ENCODE measurements at regions of chr2 and their contacts with region 1.

Region 1: GRCh38 chr2:119678998-119679710 is at the start of gene TMEM177:
- DNase-seq: peak; percentile 86 to 89 (median 88)
- H3K4me3 ChIP-seq: peak within 1 kb of the TSS; percentile 55 to 84
- H3K4me3 Mint-ChIP-seq: peak within 1 kb of the TSS; percentile 75 to 96 (median 94)
- H3K27ac ChIP-seq: peak within 1 kb of the TSS; percentile 75
- H3K27ac Mint-ChIP-seq: peak within 1 kb of the TSS; percentile 92 to 98 (median 97)
- H3K4me1 ChIP-seq: peaks cover 17% of the 10 kb centered on the region
- H3K4me1 Mint-ChIP-seq: peaks cover 21 to 49% (median 35%) of the 10 kb centered on the region in 4 donors
- H3K27me3 ChIP-seq: no peaks in the 10 kb centered on the region
- H3K27me3 Mint-ChIP-seq: peaks cover 0 to 6% of the 10 kb centered on the region in 2 donors
- total RNA-seq, gene TMEM177: 22.5 to 23.9 TPM

Region 2: DNA sequence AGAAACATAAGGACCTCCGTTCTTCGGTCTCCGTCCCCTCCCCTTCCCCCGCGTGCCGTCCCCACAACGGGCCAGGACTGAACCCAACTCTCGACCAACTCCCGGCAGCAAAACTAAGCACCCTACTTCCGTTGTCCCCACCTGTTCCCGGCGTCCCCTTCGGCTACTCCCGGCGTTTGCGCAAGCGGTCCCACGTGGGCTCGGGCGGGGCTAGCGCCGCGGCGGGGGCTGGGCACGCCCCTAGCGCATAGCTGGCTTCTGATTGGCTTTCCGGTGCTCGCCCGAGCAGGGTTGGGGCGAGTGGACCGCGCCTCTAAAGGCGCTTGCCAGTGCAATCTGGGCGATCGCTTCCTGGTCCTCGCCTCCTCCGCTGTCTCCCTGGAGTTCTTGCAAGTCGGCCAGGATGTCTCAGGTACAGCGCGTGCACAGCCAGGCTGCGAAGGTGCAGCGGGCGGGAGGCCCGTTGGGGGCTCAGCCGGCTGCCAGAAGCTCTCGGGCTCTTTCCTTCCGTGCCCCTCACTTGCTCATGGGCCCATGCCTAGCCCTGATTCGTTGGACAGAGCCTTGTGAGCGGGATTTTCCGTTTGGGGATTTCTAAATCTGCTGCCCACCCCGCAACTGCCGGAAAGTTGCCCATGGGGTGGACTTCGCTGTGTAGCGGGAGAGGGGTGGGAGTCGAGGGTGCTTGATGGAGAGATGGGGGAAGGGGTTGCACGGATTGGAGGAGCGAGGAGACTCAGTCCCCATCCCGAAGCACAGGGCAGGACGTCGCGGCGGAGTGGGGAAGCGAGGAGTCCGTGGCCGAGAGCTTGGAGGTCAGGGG is 312.3 kb before region 1 on chr2 and contains the starts of genes C2orf76 and DBI:
- CTCF ChIA-PET with region 1: no interaction called
- POLR2A ChIA-PET with region 1: interaction called, 11 read pairs
- intact Hi-C with region 1: loop called (anchors 2 kb)
- DNase-seq: peak; percentile 89 to 90 (median 89)
- H3K4me3 ChIP-seq: peak within 1 kb of the TSS; percentile 95 to 97
- H3K4me3 Mint-ChIP-seq: peak within 1 kb of the TSS; percentile 94 to 99 (median 96)
- H3K27ac ChIP-seq: peak within 1 kb of the TSS; percentile 92
- H3K27ac Mint-ChIP-seq: peak within 1 kb of the TSS; percentile 89 to 98 (median 94)
- H3K4me1 ChIP-seq: peaks cover 31% of the 10 kb centered on the region
- H3K4me1 Mint-ChIP-seq: peaks cover 32 to 52% (median 40%) of the 10 kb centered on the region in 4 donors
- H3K27me3 ChIP-seq: no peaks in the 10 kb centered on the region
- H3K27me3 Mint-ChIP-seq: no peaks in the 10 kb centered on the region
- total RNA-seq, gene C2orf76: 8.8 to 9.6 TPM
- total RNA-seq, gene DBI: 44.7 to 51.5 TPM

Region 3: GRCh38 chr2:119694845-119695521 is 15.8 kb after region 1 on chr2:
- CTCF ChIA-PET with region 1: no interaction called
- POLR2A ChIA-PET with region 1: interaction called, 31 read pairs
- intact Hi-C with region 1: loop called (anchors 2 kb)
- DNase-seq: peak in 4 of 5 donors; percentile 24 to 36 (median 27)
- H3K4me3 ChIP-seq: no peak overlapping the region
- H3K4me3 Mint-ChIP-seq: peak overlapping the region; percentile 61 to 79 (median 64)
- H3K27ac ChIP-seq: no peak overlapping the region
- H3K27ac Mint-ChIP-seq: peak overlapping the region; percentile 14 to 85 (median 70)
- H3K4me1 ChIP-seq: peaks cover 35% of the 10 kb centered on the region
- H3K4me1 Mint-ChIP-seq: peaks cover 14 to 23% (median 21%) of the 10 kb centered on the region in 4 donors
- H3K27me3 ChIP-seq: no peaks in the 10 kb centered on the region
- H3K27me3 Mint-ChIP-seq: peaks cover 0 to 3% of the 10 kb centered on the region in 2 donors

Region 4: GRCh38 chr2:120012771-120013596 is 333.8 kb after region 1 on chr2 and contains the start of gene EPB41L5:
- CTCF ChIA-PET with region 1: no interaction called
- POLR2A ChIA-PET with region 1: interaction called, 6 read pairs
- intact Hi-C with region 1: loop called (anchors 2 kb)
- DNase-seq: peak; percentile 63 to 74 (median 67)
- H3K4me3 ChIP-seq: peak within 1 kb of the TSS; percentile 52 to 76
- H3K4me3 Mint-ChIP-seq: peak within 1 kb of the TSS; percentile 82 to 87 (median 84)
- H3K27ac ChIP-seq: peak within 1 kb of the TSS; percentile 55
- H3K27ac Mint-ChIP-seq: peak within 1 kb of the TSS; percentile 0 to 86 (median 70)
- H3K4me1 ChIP-seq: peaks cover 15% of the 10 kb centered on the region
- H3K4me1 Mint-ChIP-seq: peaks cover 13 to 20% (median 15%) of the 10 kb centered on the region in 4 donors
- H3K27me3 ChIP-seq: no peaks in the 10 kb centered on the region
- H3K27me3 Mint-ChIP-seq: peaks cover 0 to 2% of the 10 kb centered on the region in 2 donors
- total RNA-seq, gene EPB41L5: 5.3 to 6.2 TPM

Region 5: GRCh38 chr2:120223034-120223912 is 544.1 kb after region 1 on chr2 and contains the start of gene TMEM185B:
- CTCF ChIA-PET with region 1: no interaction called
- POLR2A ChIA-PET with region 1: interaction called, 3 read pairs
- intact Hi-C with region 1: loop called (anchors 2 kb)
- DNase-seq: peak; percentile 89 to 94 (median 90)
- H3K4me3 ChIP-seq: peak within 1 kb of the TSS; percentile 73 to 75
- H3K4me3 Mint-ChIP-seq: peak within 1 kb of the TSS; percentile 86 to 91 (median 88)
- H3K27ac ChIP-seq: peak within 1 kb of the TSS; percentile 86
- H3K27ac Mint-ChIP-seq: peak within 1 kb of the TSS; percentile 90 to 97 (median 92)
- H3K4me1 ChIP-seq: peaks cover 35% of the 10 kb centered on the region
- H3K4me1 Mint-ChIP-seq: peaks cover 31 to 67% (median 47%) of the 10 kb centered on the region in 4 donors
- H3K27me3 ChIP-seq: no peaks in the 10 kb centered on the region
- H3K27me3 Mint-ChIP-seq: no peaks in the 10 kb centered on the region
- total RNA-seq, gene TMEM185B: 20.3 to 20.8 TPM

Region 6: DNA sequence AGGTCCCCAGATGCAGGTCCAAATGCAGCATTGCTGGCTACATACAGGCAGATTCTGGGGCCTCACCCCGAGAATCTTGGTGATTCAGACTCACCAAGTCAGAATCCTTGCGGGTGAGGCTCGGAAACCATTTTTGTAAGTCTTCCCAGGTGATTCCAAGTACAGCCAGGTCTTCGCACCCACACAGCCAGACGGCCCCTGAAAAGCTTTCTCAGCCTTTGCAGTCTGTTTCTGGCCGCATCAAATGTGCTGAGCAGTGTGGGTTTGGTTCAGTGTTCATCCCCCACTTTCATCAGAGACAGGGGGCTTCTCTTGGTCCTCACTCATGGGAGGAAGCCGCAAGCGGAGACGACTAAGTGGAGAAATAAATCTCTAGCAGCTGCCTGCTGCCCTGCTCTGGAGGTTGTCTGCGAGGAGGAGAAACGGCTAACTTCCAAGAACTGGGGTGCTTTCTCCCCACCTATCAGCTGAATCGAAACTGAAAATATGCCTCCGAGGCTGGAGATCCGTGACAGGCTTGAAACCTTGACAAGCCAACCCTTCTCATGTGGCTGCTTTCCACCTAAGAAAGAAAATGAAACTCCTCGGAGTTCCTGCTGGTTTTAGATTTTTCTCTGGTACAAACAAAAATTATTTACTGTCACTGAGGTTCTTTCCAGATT is 553.0 kb after region 1 on chr2:
- CTCF ChIA-PET with region 1: no interaction called
- POLR2A ChIA-PET with region 1: interaction called, 24 read pairs
- intact Hi-C with region 1: loop called (anchors 2 kb)
- DNase-seq: peak; percentile 75 to 83 (median 79)
- H3K4me3 ChIP-seq: peak overlapping the region; percentile 69 to 91
- H3K4me3 Mint-ChIP-seq: peak overlapping the region; percentile 91 to 99 (median 92)
- H3K27ac ChIP-seq: peak overlapping the region; percentile 79
- H3K27ac Mint-ChIP-seq: peak overlapping the region; percentile 91 to 99 (median 96)
- H3K4me1 ChIP-seq: peaks cover 46% of the 10 kb centered on the region
- H3K4me1 Mint-ChIP-seq: peaks cover 27 to 61% (median 42%) of the 10 kb centered on the region in 4 donors
- H3K27me3 ChIP-seq: no peaks in the 10 kb centered on the region
- H3K27me3 Mint-ChIP-seq: no peaks in the 10 kb centered on the region